Lower leg skin (tissue), 4 donors: ENCODE measurements at regions of chr12 and their contacts with region 1.

Region 1: GRCh38 chr12:70719672-70720420 is 82.6 kb upstream of the PTPRB start:
- DNase-seq: no peak
- H3K4me3 ChIP-seq: no peak overlapping the region
- CTCF ChIP-seq: no peak
- POLR2A ChIP-seq: no peak

Region 2: DNA sequence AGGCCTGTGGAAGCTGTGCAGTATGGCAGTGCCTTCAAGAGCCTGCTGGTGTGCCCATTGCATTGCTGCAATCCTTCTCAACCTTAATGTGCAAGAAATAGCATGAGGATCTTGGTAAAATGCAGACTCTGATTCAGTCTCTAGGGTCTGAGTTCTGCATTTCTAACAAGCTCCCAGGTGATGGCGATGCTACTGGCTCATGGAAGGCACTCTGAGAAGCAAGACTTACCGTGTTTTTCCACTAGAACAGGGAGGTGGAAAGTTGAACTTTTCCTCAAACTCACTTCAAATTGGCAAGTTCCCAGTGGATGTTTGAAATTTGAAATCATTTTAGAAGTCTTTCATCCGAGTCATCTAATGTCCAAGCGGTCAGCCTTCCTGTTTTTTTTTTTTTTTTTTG is 839.3 kb before region 1 on chr12:
- intact Hi-C with region 1: loop called (anchors 10 kb)
- DNase-seq: no peak
- H3K4me3 ChIP-seq: no peak overlapping the region
- CTCF ChIP-seq: no peak
- POLR2A ChIP-seq: no peak

Region 3: DNA sequence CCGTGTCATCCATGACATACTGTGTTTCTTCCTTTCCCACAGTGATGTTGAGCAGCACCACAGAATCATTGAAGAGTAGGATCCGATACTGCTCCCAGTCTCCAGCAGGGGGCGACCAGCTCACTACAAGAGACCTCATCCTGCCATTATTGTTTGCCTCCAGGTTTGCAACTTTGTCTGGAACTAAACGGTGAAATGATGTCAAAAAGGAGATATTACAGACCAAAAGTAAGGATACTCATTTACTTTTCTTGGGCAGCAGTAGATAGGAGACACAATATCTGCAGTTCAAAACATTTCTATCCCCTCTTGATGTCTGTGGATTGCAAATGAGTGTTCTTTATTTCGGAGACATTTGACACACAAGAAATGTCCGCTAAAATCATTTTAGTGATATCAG is 129.8 kb before region 1 on chr12:
- intact Hi-C with region 1: loop called (anchors 10 kb)
- DNase-seq: peak; percentile 59 to 91
- H3K4me3 ChIP-seq: no peak overlapping the region
- CTCF ChIP-seq: no peak
- POLR2A ChIP-seq: no peak

Region 4: DNA sequence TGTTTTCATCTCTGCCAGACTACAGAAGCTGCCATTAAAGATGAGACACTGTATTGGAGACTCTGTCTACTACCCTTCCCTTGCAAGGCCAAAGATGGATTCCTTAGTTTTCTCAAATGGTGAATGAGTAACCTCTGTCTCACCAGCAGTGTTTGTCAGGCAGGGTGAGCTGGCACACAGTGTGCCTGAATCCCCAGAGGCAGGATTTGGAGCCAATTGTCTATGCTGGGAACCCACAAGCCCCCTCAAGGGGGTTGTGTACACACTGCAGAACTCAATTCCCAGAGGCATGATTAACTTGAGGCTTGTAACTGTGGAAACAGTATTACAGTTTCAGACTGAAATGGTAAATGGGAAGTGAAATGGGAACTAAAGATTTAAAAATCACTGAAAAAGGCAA is 54.2 kb after region 1 on chr12:
- intact Hi-C with region 1: no loop called
- DNase-seq: no peak
- H3K4me3 ChIP-seq: no peak overlapping the region
- CTCF ChIP-seq: no peak
- POLR2A ChIP-seq: no peak